Mammary epithelial cell (primary cell): ENCODE measurements at regions of chr14 and their contacts with region 1.

Region 1: GRCh38 chr14:91836119-91836881 is 31.0 kb downstream of the TC2N start:
- DNase-seq: peak; percentile 84
- H3K4me3 ChIP-seq: peak overlapping the region; percentile 86 to 91 (median 91)
- H3K27ac ChIP-seq: peak overlapping the region; percentile 55
- H3K4me1 ChIP-seq: peaks cover 8% of the 10 kb centered on the region
- H3K27me3 ChIP-seq: no peaks in the 10 kb centered on the region
- CTCF ChIP-seq: no peak

Region 2: DNA sequence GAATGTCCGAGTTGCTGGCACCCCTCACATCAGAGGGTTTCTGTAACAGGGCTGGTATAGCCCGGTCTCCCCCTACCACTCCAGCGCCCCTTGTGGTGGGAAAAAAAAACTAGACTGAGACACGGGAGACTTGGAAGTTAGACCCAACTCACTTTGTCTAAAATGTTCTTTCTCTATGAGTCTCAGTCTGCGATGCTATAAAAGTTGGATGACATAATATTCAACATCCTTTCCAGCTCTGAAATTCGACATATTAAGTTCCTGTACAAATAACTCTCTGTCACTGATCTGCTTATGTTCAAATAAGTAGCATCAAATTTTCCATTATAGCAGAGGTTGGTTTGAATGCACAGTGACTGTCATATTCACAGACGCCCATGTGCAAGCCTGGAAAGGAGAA is 56.7 kb after region 1 on chr14:
- CTCF ChIA-PET with region 1: no interaction called
- dilution Hi-C with region 1: no loop called
- in situ Hi-C with region 1: no loop called
- intact Hi-C with region 1: loop called (anchors 5 kb)
- DNase-seq: no peak
- H3K4me3 ChIP-seq: no peak overlapping the region
- H3K27ac ChIP-seq: no peak overlapping the region
- H3K4me1 ChIP-seq: no peaks in the 10 kb centered on the region
- H3K27me3 ChIP-seq: no peaks in the 10 kb centered on the region
- CTCF ChIP-seq: peak; percentile 31 to 36